Heart left ventricle (tissue), 16 donors: ENCODE measurements at regions of chr6 and their contacts with region 1.

Region 1: GRCh38 chr6:150417899-150418826 is 49.4 kb downstream of the IYD start:
- DNase-seq: peak in 1 of 5 donors; percentile 42
- ATAC-seq: peak; percentile 70 to 89 (median 85)
- H3K4me3 ChIP-seq: peak overlapping the region in 10 of 12 donors; percentile 27 to 52 (median 46)
- H3K27ac ChIP-seq: peak overlapping the region; percentile 53 to 82 (median 72)
- H3K4me1 ChIP-seq: peaks cover 0 to 24% (median 8%) of the 10 kb centered on the region in 12 donors
- H3K27me3 ChIP-seq: no peaks in the 10 kb centered on the region
- CTCF ChIP-seq: peak; percentile 70 to 90 (median 79)
- POLR2A ChIP-seq: no peak

Region 2: DNA sequence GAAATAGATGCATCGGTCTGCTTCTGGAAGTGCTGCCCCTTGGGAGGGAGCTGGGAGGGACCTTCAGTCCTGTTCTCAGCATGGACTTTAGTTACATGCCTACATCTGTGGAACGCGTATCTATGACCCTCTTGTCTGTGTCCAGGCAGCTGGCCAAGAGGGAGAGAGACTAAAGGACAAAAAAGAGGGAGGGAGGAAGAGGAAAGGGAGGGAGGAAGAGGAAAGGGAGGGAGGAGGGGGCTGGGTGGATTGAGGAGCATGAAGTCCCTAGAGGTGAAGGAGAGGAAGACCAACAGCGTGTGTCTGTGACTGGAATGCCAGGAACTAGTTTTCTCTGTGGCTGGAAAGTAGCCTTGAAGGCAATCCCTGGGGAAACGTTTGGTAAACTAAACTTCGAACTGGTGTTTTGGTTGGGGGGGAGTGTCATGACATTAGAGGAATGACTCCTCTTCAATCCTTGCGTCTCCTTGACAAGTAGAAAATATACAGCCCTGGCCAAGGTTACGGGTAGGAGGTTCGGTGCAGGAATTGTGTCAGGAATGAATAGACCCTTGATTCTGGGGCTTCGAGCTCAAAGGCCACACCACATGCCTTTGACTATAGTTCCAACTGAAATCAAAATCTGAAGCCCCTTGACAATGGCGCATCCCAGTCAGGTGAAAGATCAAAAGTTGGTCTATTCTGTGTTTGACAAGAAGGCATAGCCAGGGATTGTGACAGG is 129.5 kb after region 1 on chr6:
- intact Hi-C with region 1: no loop called
- DNase-seq: peak; percentile 67 to 88 (median 78)
- ATAC-seq: peak; percentile 74 to 86 (median 81)
- H3K4me3 ChIP-seq: no peak overlapping the region
- H3K27ac ChIP-seq: peak overlapping the region in 2 of 12 donors; percentile 8 to 11
- H3K4me1 ChIP-seq: peaks cover 3 to 22% (median 16%) of the 10 kb centered on the region in 12 donors
- H3K27me3 ChIP-seq: no peaks in the 10 kb centered on the region
- CTCF ChIP-seq: no peak
- POLR2A ChIP-seq: no peak

Region 3: DNA sequence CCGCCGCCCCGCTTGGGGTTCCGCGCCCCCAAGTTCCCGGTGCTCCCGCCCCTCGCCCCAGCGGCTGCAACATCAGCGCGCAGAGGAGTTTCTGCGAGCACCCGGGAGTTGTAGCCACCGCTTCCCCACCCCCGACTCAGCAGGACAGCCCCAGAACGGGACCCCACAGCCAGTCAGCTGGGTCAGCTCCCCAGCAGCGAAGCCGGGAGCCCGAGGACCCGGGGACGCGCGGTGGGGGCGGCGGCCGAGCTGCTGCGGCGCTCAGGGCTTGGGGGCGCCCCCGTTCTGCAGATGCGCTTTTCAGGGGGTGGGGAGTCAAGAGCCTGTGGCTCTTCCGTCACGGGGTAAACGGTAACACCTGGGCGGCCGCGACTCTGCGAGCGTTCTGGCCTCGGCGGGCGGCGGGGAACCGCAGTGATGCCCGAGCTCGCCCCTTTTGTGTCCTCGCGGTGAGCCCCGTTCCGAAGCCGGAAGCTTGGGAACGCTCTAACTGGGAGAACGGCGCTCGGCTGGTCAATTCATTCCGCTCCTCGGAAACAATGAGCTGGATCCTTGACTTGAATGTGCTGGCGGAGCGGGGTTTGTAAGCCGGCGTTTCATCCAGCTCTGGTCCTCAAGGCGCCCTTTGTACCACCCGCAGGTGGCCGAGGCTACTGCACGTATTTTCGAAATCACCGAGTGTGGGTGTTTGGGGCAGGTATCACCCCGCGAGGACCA is 182.3 kb after region 1 on chr6:
- intact Hi-C with region 1: loop called in 8 of 10 experiments (anchors 1 to 10 kb)
- DNase-seq: peak; percentile 66 to 75 (median 71)
- ATAC-seq: peak; percentile 48 to 80 (median 76)
- H3K4me3 ChIP-seq: peak overlapping the region; percentile 59 to 91 (median 80)
- H3K27ac ChIP-seq: peak overlapping the region; percentile 78 to 95 (median 89)
- H3K4me1 ChIP-seq: peaks cover 0 to 22% (median 3%) of the 10 kb centered on the region in 12 donors
- H3K27me3 ChIP-seq: peaks cover 0 to 18% (median 2%) of the 10 kb centered on the region in 9 donors
- CTCF ChIP-seq: peak; percentile 20 to 66 (median 45)
- POLR2A ChIP-seq: peak in 1 of 2 donors; percentile 16

Region 4: DNA sequence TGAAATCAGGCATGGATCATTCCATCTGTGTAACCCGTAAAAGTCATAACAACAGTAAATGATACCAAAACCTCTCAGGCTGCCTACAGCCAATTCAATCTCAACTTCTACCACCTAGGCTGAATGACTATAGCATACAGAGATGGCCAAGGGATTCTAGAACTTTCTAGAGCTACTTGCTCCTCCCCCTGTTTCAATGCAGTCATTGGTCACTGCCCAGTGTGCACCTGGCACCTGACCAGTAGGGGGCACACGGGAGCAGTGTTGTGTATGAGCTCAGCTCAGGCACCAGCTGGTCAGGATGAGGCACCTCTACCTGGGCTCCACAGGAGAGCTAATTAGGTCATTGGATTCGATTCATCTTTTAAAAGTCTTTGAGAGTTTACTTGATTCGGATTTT is 267.7 kb after region 1 on chr6:
- intact Hi-C with region 1: loop called in 3 of 10 experiments (anchors 2 to 10 kb)
- DNase-seq: peak in 2 of 5 donors; percentile 29 to 61
- ATAC-seq: no peak
- H3K4me3 ChIP-seq: peak overlapping the region in 3 of 12 donors; percentile 3 to 55 (median 51)
- H3K27ac ChIP-seq: peak overlapping the region in 9 of 12 donors; percentile 50 to 92 (median 86)
- H3K4me1 ChIP-seq: peaks cover 0 to 61% (median 26%) of the 10 kb centered on the region in 12 donors
- H3K27me3 ChIP-seq: no peaks in the 10 kb centered on the region
- CTCF ChIP-seq: peak in 11 of 12 donors; percentile 40 to 66 (median 56)
- POLR2A ChIP-seq: no peak

Region 5: DNA sequence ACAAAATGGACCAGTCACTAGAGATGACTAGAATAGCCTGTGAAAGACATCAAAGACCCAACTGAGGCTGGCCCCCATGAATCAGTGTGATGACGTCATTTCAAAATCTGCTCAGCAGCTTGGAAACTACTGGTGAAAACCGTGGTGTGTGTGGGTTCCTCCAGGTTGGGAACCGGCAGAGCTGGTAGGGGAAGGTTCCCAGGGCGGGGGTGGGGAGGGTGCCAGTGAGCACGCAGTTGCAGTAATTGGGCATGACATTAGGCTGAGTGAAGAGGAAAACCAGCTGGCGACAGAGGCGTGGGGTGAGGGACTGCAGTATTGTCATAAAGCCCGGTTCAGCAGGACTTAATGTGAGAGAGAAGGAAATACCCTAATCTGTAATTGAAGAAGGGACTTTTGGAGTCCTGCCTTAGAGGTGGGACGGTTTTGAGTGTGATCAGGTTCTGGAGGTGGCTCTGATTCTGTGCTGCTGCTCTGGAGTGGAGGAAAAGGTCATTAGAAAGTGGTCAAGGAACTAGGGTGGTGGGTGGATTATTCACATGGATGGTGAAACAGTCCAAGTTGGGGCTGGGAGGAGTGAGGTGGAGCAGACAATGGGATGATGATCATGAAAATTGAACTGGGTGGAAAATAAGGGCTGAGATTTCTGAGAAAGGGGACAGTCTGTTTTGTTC is 395.3 kb after region 1 on chr6:
- intact Hi-C with region 1: loop called (anchors 1 to 2 kb)
- DNase-seq: no peak
- ATAC-seq: peak; percentile 11 to 48 (median 32)
- H3K4me3 ChIP-seq: no peak overlapping the region
- H3K27ac ChIP-seq: peak overlapping the region; percentile 4 to 75 (median 60)
- H3K4me1 ChIP-seq: peaks cover 0 to 25% (median 6%) of the 10 kb centered on the region in 12 donors
- H3K27me3 ChIP-seq: no peaks in the 10 kb centered on the region
- CTCF ChIP-seq: no peak
- POLR2A ChIP-seq: no peak

Region 6: GRCh38 chr6:151330134-151330696 is 912.1 kb after region 1 on chr6:
- intact Hi-C with region 1: loop called in 1 of 10 experiments (anchors 10 kb)
- DNase-seq: no peak
- ATAC-seq: no peak
- H3K4me3 ChIP-seq: no peak overlapping the region
- H3K27ac ChIP-seq: peak overlapping the region in 1 of 12 donors; percentile 43
- H3K4me1 ChIP-seq: peaks cover 0 to 11% (median 6%) of the 10 kb centered on the region in 12 donors
- H3K27me3 ChIP-seq: peaks cover 0 to 6% (median 0%) of the 10 kb centered on the region in 9 donors
- CTCF ChIP-seq: no peak
- POLR2A ChIP-seq: no peak